Esophagus squamous epithelium (tissue), 5 donors: ENCODE measurements at regions of chr16 and their contacts with region 1.

Region 1: DNA sequence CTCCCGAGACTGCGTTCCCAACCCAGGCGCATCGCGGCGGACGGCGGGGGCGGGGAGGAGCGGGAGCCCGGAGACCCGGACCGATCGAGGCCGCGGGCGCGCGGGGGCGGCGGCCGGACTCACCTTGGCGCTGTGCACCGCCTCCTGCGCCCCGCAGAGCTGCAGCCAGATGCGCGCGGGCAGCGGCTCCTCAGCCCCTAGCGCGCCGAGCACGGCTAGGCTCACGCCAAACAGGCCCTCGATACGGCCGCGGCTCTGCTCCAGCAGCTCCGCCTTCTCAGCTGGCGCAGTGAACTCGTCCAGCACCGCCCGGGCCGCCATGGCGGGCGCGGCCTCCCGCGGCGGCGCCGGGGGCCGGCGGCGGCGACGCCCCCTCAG is 339 bp downstream of the N4BP1 start:
- DNase-seq: no peak
- H3K4me3 ChIP-seq: peak overlapping the region; percentile 85 to 100 (median 95)
- H3K27ac ChIP-seq: peak overlapping the region; percentile 95 to 100 (median 99)
- H3K4me1 ChIP-seq: peaks cover 56 to 81% (median 60%) of the 10 kb centered on the region in 3 donors
- H3K27me3 ChIP-seq: no peaks in the 10 kb centered on the region
- CTCF ChIP-seq: no peak
- POLR2A ChIP-seq: no peak

Region 2: DNA sequence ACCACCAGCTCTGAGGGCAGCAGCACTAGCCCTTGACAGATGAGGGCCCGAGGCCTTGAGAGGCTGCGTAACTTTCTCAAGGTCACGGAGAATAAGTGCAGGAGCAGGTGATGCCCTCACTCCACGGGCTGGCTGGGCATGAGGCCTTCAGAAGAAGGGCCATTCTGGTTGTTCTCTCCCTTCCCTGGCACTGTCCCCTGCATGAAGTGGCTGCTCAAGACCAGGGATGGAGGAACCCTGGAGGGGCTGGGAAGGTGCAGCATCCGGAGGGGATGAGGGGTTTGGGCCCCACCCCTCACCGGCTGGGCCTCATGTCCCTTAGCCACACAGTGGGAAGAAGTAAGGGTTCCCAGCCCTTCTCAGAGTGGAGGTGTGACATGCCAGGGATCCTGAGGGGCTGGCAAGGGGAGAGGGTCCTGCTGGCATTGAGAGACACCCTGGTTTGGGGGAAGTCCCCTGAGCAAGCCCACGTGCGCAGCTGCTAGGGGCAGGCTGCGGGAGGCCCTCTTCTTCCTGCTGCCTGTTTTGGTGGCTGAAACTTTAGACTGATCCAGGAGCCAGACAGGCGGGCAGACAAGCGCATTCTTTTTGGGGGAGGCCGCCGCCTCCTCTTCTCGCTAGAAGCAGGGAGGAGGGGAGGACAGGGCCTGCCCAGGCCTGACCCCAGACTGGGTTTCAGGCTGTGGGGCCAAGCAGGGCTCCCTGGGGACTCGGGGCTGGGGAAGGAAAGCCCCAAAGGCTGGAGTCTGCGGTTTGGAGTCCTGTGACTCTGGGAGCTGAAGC is 73.6 kb before region 1 on chr16:
- intact Hi-C with region 1: loop called (anchors 10 kb)
- DNase-seq: no peak
- H3K4me3 ChIP-seq: no peak overlapping the region
- H3K27ac ChIP-seq: peak overlapping the region; percentile 73 to 88 (median 82)
- H3K4me1 ChIP-seq: peaks cover 29 to 70% (median 38%) of the 10 kb centered on the region in 3 donors
- H3K27me3 ChIP-seq: no peaks in the 10 kb centered on the region
- CTCF ChIP-seq: no peak
- POLR2A ChIP-seq: no peak